AG04449 (cell line): ENCODE measurements at regions of chr3 and their contacts with region 1.

Region 1: GRCh38 chr3:37974121-37975083 is 16.2 kb upstream of the VILL start:
- DNase-seq: no peak
- H3K4me3 ChIP-seq: no peak overlapping the region
- CTCF ChIP-seq: peak; percentile 84

Region 2: DNA sequence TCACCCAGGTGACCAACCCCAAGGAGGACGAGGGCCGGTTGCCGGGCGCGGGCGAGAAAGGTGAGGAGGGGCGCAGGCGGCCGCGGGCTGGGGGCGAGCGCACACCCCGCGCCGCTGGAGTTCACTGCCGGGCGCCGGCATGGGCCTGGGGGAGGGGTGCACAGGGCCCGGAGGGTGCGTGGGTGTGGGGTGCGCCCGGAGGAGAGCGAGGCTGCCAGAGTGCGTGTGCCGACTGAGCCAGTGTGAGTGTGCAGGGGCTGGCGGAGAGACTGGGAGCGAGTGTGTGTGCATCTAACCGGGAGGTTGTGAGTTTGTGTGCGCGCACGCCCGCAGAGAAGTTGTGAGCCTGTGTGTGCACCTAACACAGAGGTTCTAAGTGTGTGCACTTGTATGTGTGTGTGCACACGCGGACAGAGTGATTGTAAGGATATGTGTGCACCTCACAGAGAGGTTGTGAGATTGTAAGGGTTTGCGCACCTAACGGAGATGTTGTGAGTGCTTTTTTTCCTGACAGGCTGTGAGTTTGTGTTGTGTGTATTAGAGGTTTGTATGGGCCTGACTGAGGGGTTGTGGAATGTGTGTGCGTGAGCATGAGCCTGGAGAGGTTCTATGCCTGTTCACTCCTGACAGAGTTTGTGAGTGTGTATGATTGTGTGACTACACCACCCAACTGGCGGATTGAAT is 112.0 kb before region 1 on chr3:
- CTCF ChIA-PET with region 1: interaction called, 14 read pairs
- POLR2A ChIA-PET with region 1: no interaction called
- DNase-seq: no peak
- H3K4me3 ChIP-seq: peak overlapping the region; percentile 81
- CTCF ChIP-seq: no peak

Region 3: GRCh38 chr3:37935756-37936666 is 38.4 kb before region 1 on chr3:
- CTCF ChIA-PET with region 1: interaction called, 13 read pairs
- POLR2A ChIA-PET with region 1: no interaction called
- DNase-seq: peak; percentile 84
- H3K4me3 ChIP-seq: peak overlapping the region; percentile 6; the same call in 1 of the 2 replicates
- CTCF ChIP-seq: no peak

Region 4: GRCh38 chr3:37949866-37950265 is 24.5 kb before region 1 on chr3:
- CTCF ChIA-PET with region 1: interaction called, 47 read pairs
- POLR2A ChIA-PET with region 1: no interaction called
- DNase-seq: no peak
- H3K4me3 ChIP-seq: no peak overlapping the region
- CTCF ChIP-seq: no peak

Region 5: DNA sequence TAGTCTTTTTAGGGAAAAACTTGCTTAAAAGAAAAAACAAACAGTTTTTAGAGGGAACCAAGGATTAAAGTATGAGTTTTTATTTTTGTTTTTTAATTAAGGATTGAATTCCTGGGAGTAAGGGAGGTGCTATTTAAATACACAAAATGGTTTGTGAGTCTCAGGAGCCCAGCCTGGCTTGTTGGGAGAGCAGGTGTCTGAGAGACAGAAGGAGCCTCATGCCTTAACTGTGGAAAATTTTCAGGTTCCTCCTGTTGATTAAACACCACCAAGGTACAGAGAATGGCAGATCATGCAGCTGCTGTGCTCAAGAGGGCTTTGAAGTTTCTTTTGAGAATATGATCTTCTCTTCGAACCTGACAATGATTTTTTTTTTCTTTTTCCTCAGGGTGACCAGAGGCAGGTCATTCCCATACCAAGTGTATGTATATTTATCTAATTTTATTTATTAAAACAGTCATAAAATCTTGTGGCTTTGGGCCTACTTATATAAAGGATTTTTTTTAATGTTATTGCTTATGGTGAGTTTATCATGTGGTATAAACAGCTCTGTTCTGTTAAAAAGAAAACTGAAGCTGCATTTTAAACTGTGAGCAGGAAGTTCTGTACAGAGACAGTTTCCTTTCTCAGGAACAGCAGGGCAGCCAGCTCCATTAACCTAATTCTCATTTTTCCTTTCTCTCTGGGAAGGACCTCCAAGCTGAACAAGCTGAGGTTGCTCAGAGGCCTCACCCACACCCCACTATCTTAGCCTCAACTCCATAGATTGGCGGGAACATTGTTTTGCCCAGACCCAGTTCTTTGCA is 17.5 kb before region 1 on chr3:
- CTCF ChIA-PET with region 1: interaction called, 145 read pairs
- POLR2A ChIA-PET with region 1: no interaction called
- DNase-seq: no peak
- H3K4me3 ChIP-seq: no peak overlapping the region
- CTCF ChIP-seq: no peak

Region 6: GRCh38 chr3:37986479-37987314 is 12.3 kb after region 1 on chr3:
- CTCF ChIA-PET with region 1: interaction called, 21 read pairs
- POLR2A ChIA-PET with region 1: no interaction called
- DNase-seq: no peak
- H3K4me3 ChIP-seq: no peak overlapping the region
- CTCF ChIP-seq: no peak

Region 7: GRCh38 chr3:38004415-38005076 is 30.1 kb after region 1 on chr3:
- CTCF ChIA-PET with region 1: interaction called, 40 read pairs
- POLR2A ChIA-PET with region 1: no interaction called
- DNase-seq: no peak
- H3K4me3 ChIP-seq: no peak overlapping the region
- CTCF ChIP-seq: peak; percentile 75

Region 8: DNA sequence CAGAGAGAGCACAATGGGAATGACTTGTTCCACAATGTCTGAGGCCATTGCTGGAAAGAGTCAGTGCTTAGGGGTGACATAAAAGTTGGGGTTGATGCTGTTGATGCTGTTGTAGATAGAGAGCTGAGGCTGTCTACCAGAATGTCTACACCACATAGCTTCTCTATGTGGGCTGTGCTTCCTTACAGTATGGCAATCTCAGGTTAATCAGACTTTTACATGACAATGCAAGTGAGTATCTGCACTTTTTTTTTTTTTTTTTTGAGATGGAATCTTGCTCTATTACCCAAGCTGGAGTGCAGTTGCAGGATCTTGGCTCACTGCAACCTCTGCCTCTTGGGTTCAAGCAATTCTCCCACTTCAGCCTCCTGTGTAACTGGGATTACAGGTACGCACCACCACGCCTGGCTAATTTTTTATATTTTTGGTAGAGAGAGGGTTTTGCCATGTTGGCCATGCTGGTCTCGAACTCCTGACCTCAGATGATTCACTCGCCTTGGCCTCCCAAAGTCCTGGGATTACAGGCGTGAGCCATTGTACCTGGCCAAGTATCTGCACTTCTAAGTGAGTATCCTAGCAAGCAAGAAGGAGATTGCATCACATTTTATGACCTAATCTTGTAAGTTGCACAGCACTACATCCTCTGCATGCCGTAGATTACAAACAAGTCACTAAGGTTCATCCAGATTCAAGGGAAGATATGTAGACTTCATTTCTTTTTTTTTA is 93.3 kb after region 1 on chr3:
- CTCF ChIA-PET with region 1: no interaction called
- POLR2A ChIA-PET with region 1: no interaction called
- DNase-seq: no peak
- H3K4me3 ChIP-seq: no peak overlapping the region
- CTCF ChIP-seq: no peak

Region 9: GRCh38 chr3:38205472-38205805 is 231.0 kb after region 1 on chr3:
- CTCF ChIA-PET with region 1: no interaction called
- POLR2A ChIA-PET with region 1: no interaction called
- DNase-seq: no peak
- H3K4me3 ChIP-seq: no peak overlapping the region
- CTCF ChIP-seq: no peak